HEK293 (cell line): ENCODE measurements at regions of chr1 and their contacts with region 1.

Region 1: DNA sequence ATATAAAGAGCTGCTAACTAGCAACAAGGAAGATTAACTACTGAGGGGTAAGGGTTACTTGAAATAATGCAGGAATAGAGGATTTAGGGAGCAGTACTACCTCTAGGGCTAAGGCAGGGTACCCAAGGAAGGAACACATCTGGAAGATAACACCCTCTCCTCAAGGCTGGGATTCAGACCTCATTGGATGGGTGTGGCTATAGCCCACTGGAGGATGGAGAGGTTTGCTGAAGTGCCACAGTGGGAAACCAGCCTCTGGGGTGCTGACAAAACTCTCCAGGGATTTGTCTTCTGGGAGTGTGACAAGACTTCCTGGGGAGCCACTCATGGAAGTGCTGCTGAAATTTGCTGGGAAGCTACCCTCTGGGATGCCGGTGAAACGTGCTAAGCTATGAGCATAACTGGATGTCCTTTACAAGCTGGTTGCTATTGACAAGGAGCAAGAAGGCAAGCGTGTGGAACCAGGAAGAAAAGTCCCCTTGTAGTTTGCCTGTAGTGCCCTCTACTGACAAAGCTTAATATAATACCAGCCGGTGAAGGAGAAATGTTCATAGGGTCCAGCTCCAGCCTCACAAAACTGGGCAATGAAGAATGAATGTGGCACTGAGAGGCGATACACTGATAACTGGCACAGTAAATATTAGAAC is 122.8 kb upstream of the USP24 start:
- H3K4me3 ChIP-seq: no peak overlapping the region
- H3K27ac ChIP-seq: no peak overlapping the region
- H3K4me1 ChIP-seq: no peaks in the 10 kb centered on the region
- CTCF ChIP-seq: no peak; the same call in 1 of the 2 replicates

Region 2: DNA sequence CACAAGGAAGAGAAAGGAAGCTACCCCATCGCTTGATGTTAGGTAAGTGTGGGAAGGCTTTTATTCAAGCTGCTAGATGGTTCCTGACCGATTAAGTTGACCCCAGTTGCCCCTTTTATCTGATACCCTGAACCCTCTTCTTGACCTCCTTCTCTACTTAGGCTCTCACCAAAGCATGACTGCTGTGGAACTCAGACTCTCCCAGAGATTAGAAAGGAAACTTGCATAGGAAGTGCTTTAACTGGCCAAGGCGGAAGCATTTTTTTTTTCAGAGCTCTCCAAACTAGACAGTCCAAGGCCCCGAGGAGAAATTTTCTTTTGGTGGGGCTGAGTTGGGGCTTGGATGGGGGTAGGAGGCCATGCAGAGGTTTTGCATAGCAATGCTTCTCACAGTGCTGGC is 21.4 kb before region 1 on chr1:
- CTCF ChIA-PET with region 1: interaction called, 10 read pairs
- POLR2A ChIA-PET with region 1: no interaction called
- H3K4me3 ChIP-seq: no peak overlapping the region
- H3K27ac ChIP-seq: no peak overlapping the region
- H3K4me1 ChIP-seq: no peaks in the 10 kb centered on the region; the same call in 1 of the 2 replicates
- CTCF ChIP-seq: no peak

Region 3: GRCh38 chr1:55369474-55369873 is 31.6 kb after region 1 on chr1:
- CTCF ChIA-PET with region 1: no interaction called
- POLR2A ChIA-PET with region 1: no interaction called
- H3K4me3 ChIP-seq: no peak overlapping the region
- H3K27ac ChIP-seq: no peak overlapping the region
- H3K4me1 ChIP-seq: no peaks in the 10 kb centered on the region
- CTCF ChIP-seq: no peak

Region 4: DNA sequence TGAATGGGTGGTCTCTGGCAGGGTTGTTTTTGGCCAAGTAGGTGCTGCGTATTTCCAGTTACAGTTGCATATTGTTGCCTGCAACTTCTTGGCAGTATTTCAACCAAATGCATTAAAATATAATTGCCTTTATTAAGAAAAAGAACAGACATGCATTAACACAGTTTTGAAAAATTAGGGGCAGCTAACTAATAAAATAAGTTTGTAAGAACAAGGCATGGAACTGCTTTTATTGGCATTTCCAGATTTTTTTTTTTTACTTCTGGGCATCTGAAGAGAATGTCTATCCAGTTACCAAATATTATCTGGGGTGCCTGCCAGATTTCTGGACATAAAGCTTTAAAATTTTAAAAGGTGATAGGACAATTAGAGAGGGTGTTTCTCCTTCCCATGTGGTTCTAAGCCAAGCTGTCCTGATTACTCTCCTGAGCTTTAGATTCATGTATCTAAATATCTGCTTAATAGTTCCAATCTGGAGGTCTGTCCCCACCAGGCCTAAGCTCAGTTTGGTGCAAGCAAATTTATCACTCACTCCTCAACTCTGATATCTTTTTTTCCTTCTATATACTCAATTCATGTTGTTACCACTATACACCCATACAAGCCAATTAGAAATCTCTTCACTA is 430.5 kb after region 1 on chr1:
- CTCF ChIA-PET with region 1: no interaction called
- POLR2A ChIA-PET with region 1: no interaction called
- H3K4me3 ChIP-seq: no peak overlapping the region
- H3K27ac ChIP-seq: no peak overlapping the region
- H3K4me1 ChIP-seq: no peaks in the 10 kb centered on the region
- CTCF ChIP-seq: no peak